ENCODE measurements at regions of chr2 and their contacts with region 1.

Region 1: DNA sequence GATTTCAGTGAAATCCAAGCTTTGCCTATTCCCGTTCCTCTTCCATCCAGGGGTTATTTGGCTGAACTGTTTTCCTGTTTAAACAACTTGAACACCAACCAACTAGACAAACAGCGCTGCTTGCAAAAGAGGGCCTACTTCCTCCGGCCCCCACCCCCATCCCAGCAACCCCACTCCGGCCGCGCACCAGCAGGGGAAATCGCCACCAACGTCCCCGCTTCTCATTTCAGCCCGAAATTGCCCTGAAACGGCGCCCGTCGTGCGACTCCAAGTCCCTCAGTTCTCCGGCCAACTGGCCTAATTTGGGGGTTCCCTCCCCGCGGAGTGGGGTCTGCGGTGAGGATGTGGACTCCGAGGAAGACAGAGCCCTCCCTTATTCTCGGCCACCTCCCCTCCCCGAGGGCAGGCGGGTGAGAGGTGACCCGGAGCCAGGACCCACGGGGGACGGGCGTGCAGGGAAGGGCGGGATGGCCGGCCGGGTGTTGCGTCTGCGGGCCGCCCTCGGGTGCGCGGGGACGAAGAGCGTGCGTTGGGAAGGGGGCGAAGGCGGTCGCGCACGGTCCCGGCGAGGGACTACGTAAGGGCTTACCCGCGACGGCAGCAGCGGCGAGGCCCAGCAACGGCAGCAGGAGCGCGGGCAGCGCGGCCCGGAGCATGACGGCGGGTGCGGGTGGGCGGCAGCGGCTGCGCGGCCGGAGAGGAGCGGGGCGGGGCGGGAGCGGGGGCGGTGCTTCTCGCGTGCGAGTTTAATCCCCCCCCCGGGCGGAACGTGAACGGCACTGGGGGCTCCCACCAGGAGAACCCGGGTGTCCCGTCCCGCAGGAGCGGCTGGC is at the start of gene CD302:
- DNase-seq: peak; percentile 75
- H3K4me3 ChIP-seq: peak within 1 kb of the TSS; percentile 51 to 84 (median 77)
- H3K27ac ChIP-seq: peak within 1 kb of the TSS; percentile 48
- H3K4me1 ChIP-seq: peaks cover 33% of the 10 kb centered on the region
- H3K27me3 ChIP-seq: no peaks in the 10 kb centered on the region
- CTCF ChIP-seq: no peak
- POLR2A ChIP-seq: peak; percentile 72
- total RNA-seq, gene CD302: 10.6 and 11.5 TPM in 2 replicates

Region 2: DNA sequence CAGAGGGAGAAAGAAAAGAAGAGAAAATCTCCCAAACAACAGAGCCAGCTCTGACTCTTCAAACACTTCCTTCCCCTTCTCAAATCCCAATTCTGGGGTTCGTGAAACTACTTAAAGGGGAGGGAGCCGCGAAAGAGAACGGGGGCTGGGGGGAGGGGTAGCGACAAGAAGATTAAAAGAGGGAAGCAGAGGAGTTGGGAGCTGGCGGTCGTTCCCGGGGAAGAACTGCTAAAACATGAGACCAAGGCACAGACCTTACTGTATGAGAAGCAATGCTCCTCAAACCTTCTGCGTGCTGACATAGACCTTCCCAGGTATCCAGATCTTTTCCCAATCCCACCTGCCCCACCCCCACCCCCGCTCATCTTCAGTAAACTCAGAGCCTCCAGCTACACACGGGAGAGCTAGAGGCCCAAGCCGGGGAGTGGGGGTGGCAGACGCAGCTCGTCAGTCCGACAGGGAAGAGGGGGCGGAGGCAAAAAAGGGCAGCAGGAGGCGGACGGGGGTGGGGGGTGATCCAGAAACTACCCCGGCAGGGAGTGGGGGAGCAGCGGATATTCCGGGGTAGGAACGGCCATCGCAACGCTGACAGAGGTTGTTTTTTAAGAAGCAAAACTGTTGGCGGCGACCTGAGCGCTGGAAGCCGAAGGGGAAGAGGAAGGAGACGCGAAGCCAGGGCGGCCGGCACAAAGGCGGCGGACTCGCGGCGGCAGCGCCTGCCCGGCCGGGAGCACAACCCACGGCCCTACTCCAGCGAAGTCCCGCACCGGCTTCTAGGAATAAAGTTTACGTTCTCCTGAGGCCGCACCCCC is 182.4 kb before region 1 on chr2:
- CTCF ChIA-PET with region 1: no interaction called
- POLR2A ChIA-PET with region 1: no interaction called
- dilution Hi-C with region 1: no loop called
- intact Hi-C with region 1: loop called (anchors 2 kb)
- DNase-seq: peak; percentile 96
- H3K4me3 ChIP-seq: peak overlapping the region; percentile 49 to 100 (median 100)
- H3K27ac ChIP-seq: peak overlapping the region; percentile 100
- H3K4me1 ChIP-seq: peaks cover 30% of the 10 kb centered on the region
- H3K27me3 ChIP-seq: no peaks in the 10 kb centered on the region
- CTCF ChIP-seq: no peak
- POLR2A ChIP-seq: peak; percentile 82

Region 3: GRCh38 chr2:159755788-159756187 is 42.0 kb before region 1 on chr2:
- CTCF ChIA-PET with region 1: interaction called, 12 read pairs
- POLR2A ChIA-PET with region 1: no interaction called
- dilution Hi-C with region 1: no loop called
- intact Hi-C with region 1: no loop called
- DNase-seq: peak; percentile 49
- H3K4me3 ChIP-seq: no peak overlapping the region
- H3K27ac ChIP-seq: no peak overlapping the region
- H3K4me1 ChIP-seq: peaks cover 14% of the 10 kb centered on the region
- H3K27me3 ChIP-seq: no peaks in the 10 kb centered on the region
- CTCF ChIP-seq: peak; percentile 36 to 47
- POLR2A ChIP-seq: no peak

Region 4: DNA sequence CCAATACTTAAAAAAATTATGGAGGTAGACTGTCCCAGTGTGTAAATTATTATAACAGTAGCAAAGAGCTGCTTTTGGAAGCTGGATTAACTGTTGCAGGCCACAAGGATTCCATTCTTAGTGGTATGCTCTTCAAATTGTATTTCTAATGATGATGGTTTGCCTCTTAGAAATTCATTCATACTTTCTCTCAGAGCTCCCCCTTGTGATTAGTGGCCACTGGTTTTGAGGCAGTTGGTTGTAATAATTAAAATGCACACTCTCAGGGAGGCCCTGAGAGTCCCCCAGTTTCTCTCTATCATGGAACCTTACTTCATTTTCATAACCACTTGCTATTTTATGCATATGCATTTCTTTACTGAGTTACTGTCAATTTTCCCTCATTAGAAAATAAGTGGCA is 142.2 kb after region 1 on chr2:
- CTCF ChIA-PET with region 1: no interaction called
- POLR2A ChIA-PET with region 1: no interaction called
- dilution Hi-C with region 1: no loop called
- intact Hi-C with region 1: loop called (anchors 5 kb)
- DNase-seq: peak; percentile 59
- H3K4me3 ChIP-seq: no peak overlapping the region
- H3K27ac ChIP-seq: no peak overlapping the region
- H3K4me1 ChIP-seq: peaks cover 17% of the 10 kb centered on the region
- H3K27me3 ChIP-seq: no peaks in the 10 kb centered on the region
- CTCF ChIP-seq: peak; percentile 12 to 20
- POLR2A ChIP-seq: no peak

Region 5: GRCh38 chr2:161445097-161445496 is 1647.3 kb after region 1 on chr2:
- CTCF ChIA-PET with region 1: no interaction called
- POLR2A ChIA-PET with region 1: no interaction called
- dilution Hi-C with region 1: no loop called
- intact Hi-C with region 1: no loop called
- DNase-seq: no peak
- H3K4me3 ChIP-seq: no peak overlapping the region
- H3K27ac ChIP-seq: no peak overlapping the region
- H3K4me1 ChIP-seq: no peaks in the 10 kb centered on the region
- H3K27me3 ChIP-seq: peaks cover 3 to 10% of the 10 kb centered on the region in 2 experiments
- CTCF ChIP-seq: no peak
- POLR2A ChIP-seq: no peak

Measured in endothelial cell of umbilical vein (primary cell).